GM12878 (cell line): ENCODE measurements at regions of chr7 and their contacts with region 1.

Region 1: GRCh38 chr7:28853834-28854749 is 104.0 kb downstream of the TRIL start:
- DNase-seq: peak; percentile 26
- ATAC-seq: peak; percentile 100
- H3K4me3 ChIP-seq: peak overlapping the region; percentile 74
- H3K27ac ChIP-seq: no peak overlapping the region
- H3K4me1 ChIP-seq: 0 out of 2 replicates have a peak, but pooled peaks cover 3% of the 10 kb centered on the region
- H3K27me3 ChIP-seq: peaks cover 1 to 10% of the 10 kb centered on the region in 2 experiments; a peak in 3 of 4 replicates
- CTCF ChIP-seq: peak; percentile 85 to 95 (median 93); a peak in 5 of 6 replicates
- EP300 ChIP-seq: no peak
- POLR2A ChIP-seq: no peak
- RAD21 ChIP-seq: peak; percentile 90

Region 2: GRCh38 chr7:28298870-28299518 is 555.1 kb before region 1 on chr7:
- CTCF ChIA-PET with region 1: interaction called, 9 read pairs
- POLR2A ChIA-PET with region 1: no interaction called
- RAD21 ChIA-PET with region 1: interaction called, 5 read pairs
- SMC1A ChIA-PET with region 1: no interaction called
- in situ Hi-C with region 1: no loop called
- intact Hi-C with region 1: loop called (anchors 2 kb)
- DNase-seq: no peak
- ATAC-seq: no peak
- H3K4me3 ChIP-seq: no peak overlapping the region
- H3K27ac ChIP-seq: no peak overlapping the region
- H3K4me1 ChIP-seq: no peaks in the 10 kb centered on the region
- H3K27me3 ChIP-seq: no peaks in the 10 kb centered on the region
- CTCF ChIP-seq: no peak
- EP300 ChIP-seq: no peak
- POLR2A ChIP-seq: no peak
- RAD21 ChIP-seq: peak; percentile 22; the same call in 1 of the 2 replicates

Region 3: DNA sequence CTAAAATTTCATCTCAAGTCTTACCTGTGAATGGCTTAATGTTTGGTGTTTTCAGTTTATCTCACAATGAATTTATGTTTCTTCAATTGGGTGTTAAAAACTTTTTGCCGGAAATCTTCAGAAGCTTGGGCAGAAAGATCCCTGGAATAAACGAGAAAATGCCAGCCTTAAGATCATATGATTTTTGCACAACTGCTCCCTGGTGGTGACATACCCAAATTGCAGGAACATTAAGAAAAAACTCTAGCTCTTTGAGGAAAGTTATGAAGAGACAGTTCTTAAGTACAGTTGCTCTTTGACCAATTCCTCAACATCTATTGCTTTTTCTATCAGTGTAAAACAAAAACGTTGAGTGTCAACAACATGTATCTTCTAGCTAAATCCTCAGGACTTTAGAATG is 490.0 kb before region 1 on chr7:
- CTCF ChIA-PET with region 1: interaction called, 33 read pairs
- POLR2A ChIA-PET with region 1: no interaction called
- RAD21 ChIA-PET with region 1: interaction called, 3 read pairs
- SMC1A ChIA-PET with region 1: interaction called, 15 read pairs
- in situ Hi-C with region 1: no loop called
- intact Hi-C with region 1: loop called (anchors 5 kb)
- DNase-seq: no peak
- ATAC-seq: no peak
- H3K4me3 ChIP-seq: no peak overlapping the region
- H3K27ac ChIP-seq: no peak overlapping the region
- H3K4me1 ChIP-seq: no peaks in the 10 kb centered on the region
- H3K27me3 ChIP-seq: no peaks in the 10 kb centered on the region; a peak in 1 of 4 replicates
- CTCF ChIP-seq: peak in 2 of 3 experiments; percentile 8 to 23; a peak in 2 of 6 replicates
- EP300 ChIP-seq: no peak
- POLR2A ChIP-seq: no peak
- RAD21 ChIP-seq: no peak

Region 4: DNA sequence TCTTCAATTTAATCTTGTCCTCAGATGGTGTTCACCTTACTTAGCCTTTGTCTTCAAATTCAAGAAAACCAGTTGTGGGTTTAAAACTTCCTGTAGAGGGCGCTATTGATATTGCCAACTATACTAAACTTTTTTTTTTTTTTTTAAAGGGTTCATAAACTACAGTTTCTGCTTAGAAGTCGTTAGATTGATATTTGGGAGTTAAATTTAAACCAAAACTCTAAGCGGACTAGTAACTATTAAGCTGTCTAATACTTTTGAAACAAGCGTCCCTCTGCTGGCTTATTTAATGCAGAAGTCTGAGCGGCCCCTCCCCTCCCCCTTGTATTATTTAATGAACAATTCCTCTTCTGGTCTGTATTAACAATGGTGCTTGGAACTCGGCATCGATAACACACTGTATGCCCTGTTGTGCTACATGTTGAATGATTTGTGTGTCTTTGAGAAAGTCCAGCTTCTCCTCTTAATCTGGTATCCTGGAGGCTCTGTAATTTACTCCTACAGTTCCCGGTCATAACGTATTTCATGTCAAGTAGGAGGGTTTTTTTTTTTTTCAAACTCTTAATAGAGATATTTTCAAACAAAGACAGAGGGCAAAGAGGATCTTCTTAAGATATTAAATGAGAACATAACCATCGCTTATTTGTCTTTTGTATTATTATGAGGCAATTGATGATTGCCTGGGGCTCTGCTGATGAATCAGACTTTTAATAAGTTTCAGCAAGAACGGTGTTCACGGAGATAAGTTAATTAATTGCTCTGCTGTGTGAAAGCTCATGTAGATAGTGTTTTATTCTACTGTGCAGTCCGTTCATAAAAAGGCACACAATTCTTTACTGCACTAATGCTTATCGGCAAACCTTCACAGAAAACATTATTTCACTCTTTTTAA is 464.3 kb before region 1 on chr7:
- CTCF ChIA-PET with region 1: interaction called, 24 read pairs
- POLR2A ChIA-PET with region 1: no interaction called
- RAD21 ChIA-PET with region 1: interaction called, 8 read pairs
- SMC1A ChIA-PET with region 1: interaction called, 25 read pairs
- in situ Hi-C with region 1: loop called (anchors 5 kb)
- intact Hi-C with region 1: loop called (anchors 1 kb)
- DNase-seq: no peak
- ATAC-seq: peak; percentile 64
- H3K4me3 ChIP-seq: no peak overlapping the region
- H3K27ac ChIP-seq: no peak overlapping the region
- H3K4me1 ChIP-seq: no peaks in the 10 kb centered on the region
- H3K27me3 ChIP-seq: no peaks in the 10 kb centered on the region
- CTCF ChIP-seq: peak; percentile 56 to 71 (median 61)
- EP300 ChIP-seq: no peak
- POLR2A ChIP-seq: no peak
- RAD21 ChIP-seq: peak; percentile 86

Region 5: GRCh38 chr7:28626624-28627262 is 227.3 kb before region 1 on chr7:
- CTCF ChIA-PET with region 1: interaction called, 7 read pairs
- POLR2A ChIA-PET with region 1: no interaction called
- RAD21 ChIA-PET with region 1: interaction called, 3 read pairs
- SMC1A ChIA-PET with region 1: no interaction called
- in situ Hi-C with region 1: no loop called
- intact Hi-C with region 1: loop called (anchors 5 kb)
- DNase-seq: no peak
- ATAC-seq: peak; percentile 57
- H3K4me3 ChIP-seq: no peak overlapping the region
- H3K27ac ChIP-seq: no peak overlapping the region
- H3K4me1 ChIP-seq: peaks cover 3% of the 10 kb centered on the region; the same call in 1 of the 2 replicates
- H3K27me3 ChIP-seq: no peaks in the 10 kb centered on the region
- CTCF ChIP-seq: peak; percentile 50 to 70 (median 67)
- EP300 ChIP-seq: no peak
- POLR2A ChIP-seq: no peak
- RAD21 ChIP-seq: peak; percentile 74

Region 6: DNA sequence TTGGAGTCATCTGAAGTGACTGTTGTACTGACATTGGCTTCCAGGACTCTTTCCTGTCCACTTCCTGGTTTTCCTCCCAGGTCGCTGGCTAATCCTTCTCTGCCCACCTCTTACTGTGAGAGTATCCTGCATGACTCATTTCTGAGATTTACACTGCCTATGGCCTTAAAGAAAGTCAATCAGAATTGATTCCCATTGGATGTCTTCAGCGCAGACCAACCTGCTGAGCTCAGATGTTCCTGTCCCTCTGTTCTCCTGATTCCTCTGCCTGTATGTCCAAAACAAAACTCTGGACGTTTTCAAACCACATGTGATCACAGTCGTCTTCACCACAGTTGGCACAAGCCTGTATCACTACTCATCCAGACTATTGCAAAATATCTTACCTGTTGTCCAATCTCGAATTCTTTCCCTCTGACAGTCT is 179.7 kb before region 1 on chr7:
- CTCF ChIA-PET with region 1: no interaction called
- POLR2A ChIA-PET with region 1: no interaction called
- RAD21 ChIA-PET with region 1: no interaction called
- SMC1A ChIA-PET with region 1: no interaction called
- in situ Hi-C with region 1: no loop called
- intact Hi-C with region 1: no loop called
- DNase-seq: no peak
- ATAC-seq: no peak
- H3K4me3 ChIP-seq: no peak overlapping the region
- H3K27ac ChIP-seq: no peak overlapping the region
- H3K4me1 ChIP-seq: no peaks in the 10 kb centered on the region
- H3K27me3 ChIP-seq: no peaks in the 10 kb centered on the region
- CTCF ChIP-seq: no peak
- EP300 ChIP-seq: no peak
- POLR2A ChIP-seq: no peak
- RAD21 ChIP-seq: no peak